Heart right ventricle (tissue), 16 donors: ENCODE measurements at regions of chr4 and their contacts with region 1.

Region 1: GRCh38 chr4:7802093-7802726 is 137.5 kb downstream of the AFAP1 start:
- DNase-seq: peak; percentile 76 to 87
- ATAC-seq: peak; percentile 40 to 66 (median 56)
- H3K4me3 ChIP-seq: no peak overlapping the region
- H3K27ac ChIP-seq: no peak overlapping the region
- H3K4me1 ChIP-seq: peaks cover 9 to 36% (median 32%) of the 10 kb centered on the region in 9 donors
- H3K27me3 ChIP-seq: no peaks in the 10 kb centered on the region
- CTCF ChIP-seq: peak; percentile 90 to 96 (median 94)

Region 2: DNA sequence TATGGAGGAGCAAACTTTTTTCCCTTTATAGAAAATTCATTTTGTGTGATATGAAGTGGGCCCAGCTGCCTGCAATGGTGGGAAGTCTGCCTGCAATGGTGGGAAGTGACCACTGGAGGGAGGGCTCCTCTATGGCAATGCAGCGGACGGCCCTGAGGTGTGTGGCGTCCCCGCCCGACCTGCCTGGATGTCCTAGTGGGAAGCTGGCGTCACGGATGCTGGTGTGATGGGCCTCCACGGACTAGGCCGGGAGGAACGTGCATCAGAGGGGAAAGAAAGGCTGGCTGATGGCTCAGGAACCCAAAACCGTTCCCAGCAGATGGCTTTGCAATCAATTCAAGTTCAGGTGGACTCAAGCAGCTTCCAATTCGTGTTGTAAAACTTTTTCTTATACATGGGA is 40.5 kb before region 1 on chr4:
- intact Hi-C with region 1: loop called (anchors 1 to 5 kb)
- DNase-seq: peak; percentile 76 to 82
- ATAC-seq: peak; percentile 67 to 87 (median 80)
- H3K4me3 ChIP-seq: no peak overlapping the region
- H3K27ac ChIP-seq: peak overlapping the region in 2 of 10 donors; percentile 1 to 17
- H3K4me1 ChIP-seq: peaks cover 2 to 28% (median 11%) of the 10 kb centered on the region in 9 donors
- H3K27me3 ChIP-seq: no peaks in the 10 kb centered on the region
- CTCF ChIP-seq: peak; percentile 74 to 91 (median 82)

Region 3: GRCh38 chr4:7843831-7844593 is 41.8 kb after region 1 on chr4:
- intact Hi-C with region 1: loop called in 6 of 10 experiments (anchors 1 to 5 kb)
- DNase-seq: peak; percentile 79 to 81
- ATAC-seq: peak; percentile 43 to 68 (median 54)
- H3K4me3 ChIP-seq: no peak overlapping the region
- H3K27ac ChIP-seq: peak overlapping the region in 8 of 10 donors; percentile 56 to 88 (median 78)
- H3K4me1 ChIP-seq: peaks cover 3 to 38% (median 30%) of the 10 kb centered on the region in 9 donors
- H3K27me3 ChIP-seq: no peaks in the 10 kb centered on the region
- CTCF ChIP-seq: peak; percentile 59 to 74 (median 64)

Region 4: DNA sequence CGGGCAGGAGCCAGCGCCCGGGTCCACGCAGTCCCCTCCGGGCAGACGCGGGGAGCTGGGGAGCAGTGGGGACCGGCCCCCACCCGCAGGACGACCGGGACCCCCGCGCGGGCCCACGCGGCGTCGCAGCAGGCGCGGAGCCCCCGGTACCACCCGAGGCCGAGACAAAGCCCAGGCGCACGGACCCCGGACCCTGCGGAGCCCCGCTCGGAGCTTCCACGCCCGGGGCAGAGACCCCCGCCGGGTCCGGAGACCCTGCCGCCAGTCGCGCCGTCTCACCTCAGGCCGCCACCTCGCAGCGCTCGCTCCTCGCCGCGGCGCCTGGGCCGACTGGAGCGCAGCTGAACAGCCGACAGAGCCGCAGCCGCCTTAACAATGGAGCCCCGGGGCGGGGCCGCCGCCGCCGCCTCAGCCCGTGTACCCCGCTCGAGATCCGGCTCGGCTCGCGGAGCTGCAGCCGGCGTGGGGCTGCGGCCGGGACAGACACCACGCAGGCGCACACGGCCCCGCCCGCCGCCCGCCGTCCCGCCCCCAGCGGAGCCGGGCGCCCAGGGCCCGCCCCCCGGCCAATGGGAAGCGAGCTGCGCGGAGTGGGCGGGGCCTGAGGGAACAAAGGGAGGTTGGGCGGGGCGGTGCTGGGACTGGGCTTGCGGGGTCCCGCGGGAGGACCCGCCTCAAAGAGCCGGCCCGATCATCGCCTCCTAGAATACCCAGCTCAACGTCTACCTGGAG is 137.3 kb after region 1 on chr4 and contains the start of gene AFAP1:
- intact Hi-C with region 1: loop called in 3 of 10 experiments (anchors 2 to 10 kb)
- DNase-seq: peak; percentile 91 to 92
- ATAC-seq: peak; percentile 95 to 98 (median 97)
- H3K4me3 ChIP-seq: peak within 1 kb of the TSS; percentile 77 to 93 (median 86)
- H3K27ac ChIP-seq: peak within 1 kb of the TSS; percentile 75 to 95 (median 92)
- H3K4me1 ChIP-seq: peaks cover 0 to 31% (median 19%) of the 10 kb centered on the region in 9 donors
- H3K27me3 ChIP-seq: peaks cover 0 to 34% (median 0%) of the 10 kb centered on the region in 7 donors
- CTCF ChIP-seq: no peak
- total RNA-seq, gene AFAP1: 4.7 to 8.9 (median 6.2) TPM